ENCODE measurements at regions of chr12 and their contacts with region 1.

Region 1: GRCh38 chr12:105107494-105108371 is at the start of gene WASHC4:
- DNase-seq: peak; percentile 97
- ATAC-seq: peak; percentile 96
- H3K4me3 Mint-ChIP-seq: peak within 1 kb of the TSS; percentile 93
- H3K27ac Mint-ChIP-seq: peak within 1 kb of the TSS; percentile 88
- H3K4me1 Mint-ChIP-seq: peaks cover 33% of the 10 kb centered on the region
- H3K27me3 Mint-ChIP-seq: peaks cover 13% of the 10 kb centered on the region
- total RNA-seq, gene WASHC4: 29.6 to 35.9 TPM

Region 2: DNA sequence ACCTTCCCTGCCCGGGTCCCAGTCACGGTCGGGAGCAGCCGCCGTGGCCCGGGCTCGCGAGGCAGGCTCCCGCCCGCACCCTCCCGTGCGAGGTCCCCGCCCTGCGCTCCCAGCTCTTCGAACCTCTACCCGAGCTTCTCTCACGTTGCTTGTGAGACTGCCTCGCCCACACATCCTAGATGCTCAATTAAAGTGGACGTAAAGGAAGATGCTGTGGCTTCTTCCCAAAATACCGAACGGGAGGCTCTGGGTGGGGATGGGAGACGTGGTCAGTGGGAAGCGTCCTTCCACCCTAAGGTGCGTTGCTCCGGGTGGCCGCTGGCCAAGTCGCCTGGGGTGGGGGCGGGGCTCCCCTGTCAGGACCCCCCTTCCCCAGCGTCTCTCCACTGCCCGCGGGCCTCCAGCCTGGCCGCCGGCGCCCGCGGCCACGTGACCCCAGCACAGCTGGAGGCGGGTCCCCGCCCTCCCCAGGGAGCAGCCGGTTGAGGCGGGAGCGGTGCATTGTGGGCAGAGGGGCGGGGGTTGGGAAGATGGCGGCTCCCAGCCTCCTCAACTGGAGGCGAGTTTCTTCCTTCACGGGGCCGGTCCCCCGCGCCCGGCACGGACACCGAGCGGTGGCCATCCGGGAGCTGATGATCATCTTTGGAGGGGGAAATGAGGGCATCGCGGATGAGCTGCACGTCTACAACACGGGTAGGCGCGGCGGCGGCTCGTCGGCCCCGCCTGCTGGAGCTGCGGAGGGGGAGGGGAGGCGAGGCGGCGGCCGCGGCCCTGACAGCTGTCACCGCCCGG is 1043.5 kb before region 1 on chr12 and contains the start of gene HCFC2:
- CTCF ChIA-PET with region 1: no interaction called
- POLR2A ChIA-PET with region 1: no interaction called
- intact Hi-C with region 1: loop called in 1 of 2 experiments (anchors 5 kb)
- DNase-seq: peak; percentile 95
- ATAC-seq: peak; percentile 95
- H3K4me3 Mint-ChIP-seq: peak within 1 kb of the TSS; percentile 85
- H3K27ac Mint-ChIP-seq: peak within 1 kb of the TSS; percentile 89
- H3K4me1 Mint-ChIP-seq: peaks cover 20% of the 10 kb centered on the region
- H3K27me3 Mint-ChIP-seq: peaks cover 7% of the 10 kb centered on the region
- total RNA-seq, gene HCFC2: 6.4 to 6.5 TPM

Region 3: DNA sequence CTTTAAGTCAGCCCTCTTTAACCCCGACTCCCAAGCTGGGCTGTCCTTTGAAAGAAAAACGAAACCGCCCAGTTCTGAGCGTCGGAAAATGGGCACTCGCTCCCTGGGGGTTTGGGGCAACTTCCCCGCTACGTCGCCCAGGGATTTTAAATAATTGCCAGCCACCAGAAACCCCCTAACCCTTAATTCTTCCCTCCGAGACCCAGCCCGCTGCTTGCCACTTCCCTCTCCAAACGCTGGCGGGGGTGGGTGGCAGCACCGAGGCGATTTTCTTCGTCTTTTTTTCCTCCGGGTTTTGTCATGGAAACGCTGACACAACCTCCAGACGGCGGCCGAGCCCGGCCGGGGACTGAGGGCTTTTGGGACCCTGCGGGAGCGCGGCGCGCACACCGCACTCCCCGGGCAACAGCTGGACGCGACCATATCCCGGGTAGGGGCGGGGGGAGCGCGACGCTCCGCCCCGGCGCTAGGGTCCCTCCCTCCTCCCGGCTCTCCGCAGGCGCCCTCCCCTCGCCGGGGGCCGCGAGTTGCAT is 651.2 kb before region 1 on chr12 and contains the start of gene CHST11:
- CTCF ChIA-PET with region 1: no interaction called
- POLR2A ChIA-PET with region 1: no interaction called
- intact Hi-C with region 1: loop called in 1 of 2 experiments (anchors 2 kb)
- DNase-seq: peak; percentile 88
- ATAC-seq: peak; percentile 76
- H3K4me3 Mint-ChIP-seq: peak within 1 kb of the TSS; percentile 91
- H3K27ac Mint-ChIP-seq: peak within 1 kb of the TSS; percentile 97
- H3K4me1 Mint-ChIP-seq: peaks cover 35% of the 10 kb centered on the region
- H3K27me3 Mint-ChIP-seq: no peaks in the 10 kb centered on the region
- total RNA-seq, gene CHST11: 33.3 to 33.6 TPM

Region 4: GRCh38 chr12:104986022-104986941 is 121.5 kb before region 1 on chr12 and contains the start of gene NOPCHAP1:
- CTCF ChIA-PET with region 1: no interaction called
- POLR2A ChIA-PET with region 1: no interaction called
- intact Hi-C with region 1: loop called in 1 of 2 experiments (anchors 1 kb)
- DNase-seq: peak; percentile 91
- ATAC-seq: peak; percentile 98
- H3K4me3 Mint-ChIP-seq: peak within 1 kb of the TSS; percentile 78
- H3K27ac Mint-ChIP-seq: peak within 1 kb of the TSS; percentile 40
- H3K4me1 Mint-ChIP-seq: peaks cover 48% of the 10 kb centered on the region
- H3K27me3 Mint-ChIP-seq: peaks cover 11% of the 10 kb centered on the region
- total RNA-seq, gene NOPCHAP1: 31.1 to 35.2 TPM

Region 5: GRCh38 chr12:105158876-105159275 is 51.1 kb after region 1 on chr12:
- CTCF ChIA-PET with region 1: no interaction called
- POLR2A ChIA-PET with region 1: no interaction called
- intact Hi-C with region 1: no loop called
- DNase-seq: no peak
- ATAC-seq: no peak
- H3K4me3 Mint-ChIP-seq: no peak overlapping the region
- H3K27ac Mint-ChIP-seq: no peak overlapping the region
- H3K4me1 Mint-ChIP-seq: peaks cover 8% of the 10 kb centered on the region
- H3K27me3 Mint-ChIP-seq: no peaks in the 10 kb centered on the region

Region 6: GRCh38 chr12:106247674-106248311 is 1140.1 kb after region 1 on chr12 and contains the start of gene CKAP4:
- CTCF ChIA-PET with region 1: no interaction called
- POLR2A ChIA-PET with region 1: no interaction called
- intact Hi-C with region 1: loop called in 1 of 2 experiments (anchors 5 kb)
- DNase-seq: peak; percentile 72
- ATAC-seq: peak; percentile 49
- H3K4me3 Mint-ChIP-seq: peak within 1 kb of the TSS; percentile 68
- H3K27ac Mint-ChIP-seq: peak within 1 kb of the TSS; percentile 80
- H3K4me1 Mint-ChIP-seq: peaks cover 30% of the 10 kb centered on the region
- H3K27me3 Mint-ChIP-seq: no peaks in the 10 kb centered on the region
- total RNA-seq, gene CKAP4: 13.7 to 15.6 TPM

Region 7: DNA sequence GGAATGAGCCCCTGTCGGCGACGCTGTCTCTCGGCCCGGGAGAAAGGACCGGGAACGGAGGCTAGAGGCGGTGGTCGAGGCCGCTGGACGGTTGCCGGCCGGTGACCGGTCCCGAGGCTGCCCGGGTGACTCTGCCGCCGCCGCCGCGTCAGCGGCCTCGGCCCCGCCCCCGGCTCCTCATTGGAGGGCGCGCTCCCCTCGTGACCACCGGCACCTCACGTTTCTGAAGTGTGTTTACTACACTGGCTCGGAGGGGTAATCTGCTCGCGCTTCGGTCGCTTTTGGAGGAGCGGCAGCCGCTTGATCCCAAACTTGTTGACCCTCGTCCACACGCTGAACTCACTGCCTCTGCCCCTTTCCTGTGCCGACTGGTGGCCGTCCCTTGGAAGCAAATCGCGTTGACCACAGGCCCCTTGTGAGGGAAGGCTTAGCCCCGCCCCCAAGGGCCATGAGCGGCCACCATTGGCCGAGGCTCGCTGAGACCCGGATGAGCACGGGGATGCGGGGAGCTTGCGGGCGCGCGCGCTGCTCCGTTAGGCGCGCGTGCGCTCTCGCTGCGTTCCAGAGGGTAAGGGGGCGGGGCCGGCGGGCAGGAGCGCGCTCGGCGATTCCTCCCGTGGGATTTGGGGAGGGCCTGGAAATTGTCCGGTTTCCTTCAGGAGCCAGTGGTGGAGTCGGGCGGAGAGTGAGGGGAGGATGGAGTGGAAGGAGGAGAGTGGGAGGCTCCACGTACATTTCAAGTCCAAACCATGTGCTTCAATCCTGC is 1985.9 kb after region 1 on chr12 and contains the start of gene CRY1:
- CTCF ChIA-PET with region 1: no interaction called
- POLR2A ChIA-PET with region 1: no interaction called
- intact Hi-C with region 1: loop called in 1 of 2 experiments (anchors 10 kb)
- DNase-seq: peak; percentile 96
- ATAC-seq: peak; percentile 83
- H3K4me3 Mint-ChIP-seq: no peak within 1 kb of the TSS
- H3K27ac Mint-ChIP-seq: peak within 1 kb of the TSS; percentile 99
- H3K4me1 Mint-ChIP-seq: peaks cover 3% of the 10 kb centered on the region
- H3K27me3 Mint-ChIP-seq: peaks cover 7% of the 10 kb centered on the region
- total RNA-seq, gene CRY1: 14.8 to 17.7 TPM

Measured in activated CD4-positive, alpha-beta T cell treated with anti-CD3 and anti-CD28 coated beads for 36 hours (primary cell).